Head of caudate nucleus (tissue), 42 donors: ENCODE measurements at regions of chr5 and their contacts with region 1.

Region 1: DNA sequence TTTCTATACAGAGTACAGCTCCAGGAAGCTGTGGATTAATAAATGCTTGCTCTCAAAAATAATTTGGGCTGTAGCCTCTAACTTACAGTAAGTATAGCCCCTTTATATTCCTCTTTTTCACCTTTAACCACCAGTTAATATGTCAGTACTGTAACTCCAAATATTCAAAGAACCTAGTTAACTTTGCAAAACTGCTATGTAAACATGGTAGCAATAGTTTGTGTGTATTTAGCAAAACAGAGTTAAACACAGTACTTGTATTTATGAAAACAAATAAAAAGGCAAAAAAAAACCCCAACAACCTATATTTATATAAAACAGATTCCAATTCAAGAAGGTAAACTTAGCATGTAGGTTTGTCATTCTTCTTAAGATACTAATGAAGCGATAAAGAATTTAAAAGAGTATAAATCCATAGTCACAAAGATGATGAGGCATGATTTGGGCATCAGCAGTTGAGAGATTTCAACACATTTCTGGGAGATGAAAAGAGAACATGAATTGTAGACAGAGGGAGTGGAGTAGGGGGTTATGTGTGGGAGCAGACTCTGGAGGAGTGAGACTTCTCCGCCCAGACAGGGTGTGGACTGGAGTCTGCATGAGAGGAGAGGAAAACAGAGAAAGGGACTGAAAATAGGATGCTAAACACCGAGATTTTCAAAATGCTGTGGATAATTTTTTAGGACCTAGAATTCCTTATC is 47.0 kb upstream of the F2RL1 start:
- DNase-seq: no peak

Region 2: GRCh38 chr5:76601470-76601869 is 170.4 kb before region 1 on chr5:
- intact Hi-C with region 1: loop called (anchors 5 kb)
- DNase-seq: peak in 21 of 42 donors; percentile 6 to 73 (median 41)

Region 3: GRCh38 chr5:76720988-76721569 is 50.8 kb before region 1 on chr5:
- intact Hi-C with region 1: no loop called
- DNase-seq: no peak

Region 4: DNA sequence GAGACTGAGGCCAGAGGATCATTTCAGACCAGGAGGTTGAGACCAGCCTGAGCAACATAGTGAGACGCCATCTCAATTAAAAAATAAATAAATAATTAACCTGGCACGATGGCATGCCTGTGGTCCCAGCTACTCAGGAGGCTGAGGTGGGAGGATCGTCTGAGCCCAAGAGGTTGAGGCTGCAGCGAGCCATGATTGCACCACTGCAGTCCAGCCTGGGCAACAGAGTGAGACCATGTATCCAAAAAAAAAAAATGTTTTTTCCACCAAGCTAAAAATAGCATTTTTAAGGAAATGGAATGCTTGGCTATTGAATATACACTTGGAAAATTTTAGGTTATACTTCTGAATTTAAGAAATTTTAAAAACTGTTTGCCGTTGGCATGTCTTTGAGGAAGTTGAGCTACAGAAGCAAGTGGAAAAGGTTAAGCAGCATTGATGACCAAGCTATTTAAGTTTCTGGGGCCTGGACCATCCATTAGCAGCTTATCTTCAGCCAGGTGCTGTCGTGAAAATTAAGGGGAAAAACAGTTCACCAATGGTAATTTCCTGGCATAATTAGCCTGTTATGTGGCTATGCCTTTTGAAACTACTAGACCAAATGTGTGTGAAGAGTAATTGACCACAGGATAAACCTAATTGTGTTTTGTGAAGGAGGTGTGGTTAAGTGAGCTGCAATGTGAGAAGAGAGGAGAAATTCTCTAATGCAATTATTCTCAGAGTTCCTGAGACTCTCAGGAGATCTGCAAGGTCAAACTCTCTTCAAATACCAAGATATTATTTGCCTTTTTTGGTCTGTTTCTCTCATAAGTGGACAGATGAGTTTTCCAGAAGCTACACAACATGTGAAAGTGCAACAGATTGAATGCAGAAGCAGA is 34.9 kb before region 1 on chr5:
- intact Hi-C with region 1: no loop called
- DNase-seq: no peak